Heart right ventricle (tissue), 16 donors: ENCODE measurements at regions of chr7 and their contacts with region 1.

Region 1: DNA sequence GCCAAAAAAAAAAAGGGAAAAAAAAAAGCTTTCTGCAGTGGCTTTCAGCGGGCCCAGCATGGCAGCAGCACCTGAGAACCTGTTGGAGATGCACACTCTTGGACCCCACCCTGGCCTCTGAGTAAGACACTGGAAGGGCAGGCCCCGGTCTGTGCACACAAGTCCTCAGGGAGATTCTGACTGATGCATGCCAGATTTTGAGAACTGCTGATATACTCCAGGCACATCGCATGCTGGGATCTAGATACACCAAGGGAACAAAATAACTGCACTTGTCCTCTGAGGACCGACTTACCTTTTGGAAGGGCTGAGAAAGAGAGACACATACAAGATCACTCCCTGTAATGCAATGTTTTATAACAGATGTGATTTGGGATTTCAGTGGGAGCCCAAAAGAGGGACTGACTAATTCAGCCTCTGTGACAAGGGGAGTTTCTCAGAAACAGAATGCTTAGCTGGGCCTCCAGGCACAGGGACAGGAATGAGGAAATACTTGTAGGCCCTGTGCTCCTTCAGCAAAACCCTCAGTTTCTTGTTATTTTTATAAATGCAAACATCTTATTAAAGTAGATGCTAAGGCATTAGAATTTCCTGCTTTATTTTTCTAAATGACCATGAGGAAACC is 8.2 kb downstream of the EGFR start:
- DNase-seq: no peak
- ATAC-seq: peak in 5 of 8 donors; percentile 26 to 74 (median 43)
- H3K4me3 ChIP-seq: no peak overlapping the region
- H3K27ac ChIP-seq: peak overlapping the region in 4 of 10 donors; percentile 6 to 17 (median 12)
- H3K4me1 ChIP-seq: peaks cover 0 to 36% (median 13%) of the 10 kb centered on the region in 9 donors
- H3K27me3 ChIP-seq: no peaks in the 10 kb centered on the region
- CTCF ChIP-seq: no peak

Region 2: DNA sequence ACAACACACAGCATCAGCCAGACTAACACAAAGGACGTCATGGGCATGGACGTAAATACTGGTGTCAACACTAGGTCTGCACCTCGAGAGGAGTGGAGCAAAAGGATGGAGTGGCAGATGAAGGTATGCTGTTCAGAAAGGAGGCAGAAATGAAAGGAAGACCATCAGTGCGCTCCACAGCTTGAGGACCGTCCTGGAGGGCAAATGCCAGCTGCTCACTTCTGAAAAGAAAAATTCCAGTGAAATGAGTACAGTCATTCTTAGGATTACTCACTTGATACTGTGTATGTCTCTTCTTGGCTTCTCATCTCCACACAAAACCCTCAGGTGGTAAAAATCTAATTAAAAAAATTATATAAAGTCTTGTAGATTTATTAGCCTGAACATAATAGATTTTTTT is 36.7 kb after region 1 on chr7:
- intact Hi-C with region 1: loop called in 1 of 10 experiments (anchors 5 kb)
- DNase-seq: no peak
- ATAC-seq: no peak
- H3K4me3 ChIP-seq: no peak overlapping the region
- H3K27ac ChIP-seq: peak overlapping the region in 1 of 10 donors; percentile 34
- H3K4me1 ChIP-seq: peaks cover 0 to 64% (median 35%) of the 10 kb centered on the region in 9 donors
- H3K27me3 ChIP-seq: no peaks in the 10 kb centered on the region
- CTCF ChIP-seq: no peak